ENCODE measurements at regions of chr19 and their contacts with region 1.

Region 1: GRCh38 chr19:4524808-4525562 is 6.7 kb upstream of the PLIN4 start:
- DNase-seq: peak in 1 of 2 donors; percentile 22
- H3K4me3 ChIP-seq: no peak overlapping the region
- CTCF ChIP-seq: no peak
- POLR2A ChIP-seq: no peak

Region 2: GRCh38 chr19:4108767-4109625 is 416.0 kb before region 1 on chr19:
- intact Hi-C with region 1: no loop called
- DNase-seq: no peak
- H3K4me3 ChIP-seq: no peak overlapping the region
- CTCF ChIP-seq: no peak
- POLR2A ChIP-seq: no peak

Region 3: GRCh38 chr19:4278419-4279266 is 246.3 kb before region 1 on chr19 and contains the start of gene SHD:
- intact Hi-C with region 1: loop called (anchors 10 kb)
- DNase-seq: no peak
- H3K4me3 ChIP-seq: no peak within 1 kb of the TSS
- CTCF ChIP-seq: no peak
- POLR2A ChIP-seq: no peak
- total RNA-seq, gene SHD: not detected

Region 4: DNA sequence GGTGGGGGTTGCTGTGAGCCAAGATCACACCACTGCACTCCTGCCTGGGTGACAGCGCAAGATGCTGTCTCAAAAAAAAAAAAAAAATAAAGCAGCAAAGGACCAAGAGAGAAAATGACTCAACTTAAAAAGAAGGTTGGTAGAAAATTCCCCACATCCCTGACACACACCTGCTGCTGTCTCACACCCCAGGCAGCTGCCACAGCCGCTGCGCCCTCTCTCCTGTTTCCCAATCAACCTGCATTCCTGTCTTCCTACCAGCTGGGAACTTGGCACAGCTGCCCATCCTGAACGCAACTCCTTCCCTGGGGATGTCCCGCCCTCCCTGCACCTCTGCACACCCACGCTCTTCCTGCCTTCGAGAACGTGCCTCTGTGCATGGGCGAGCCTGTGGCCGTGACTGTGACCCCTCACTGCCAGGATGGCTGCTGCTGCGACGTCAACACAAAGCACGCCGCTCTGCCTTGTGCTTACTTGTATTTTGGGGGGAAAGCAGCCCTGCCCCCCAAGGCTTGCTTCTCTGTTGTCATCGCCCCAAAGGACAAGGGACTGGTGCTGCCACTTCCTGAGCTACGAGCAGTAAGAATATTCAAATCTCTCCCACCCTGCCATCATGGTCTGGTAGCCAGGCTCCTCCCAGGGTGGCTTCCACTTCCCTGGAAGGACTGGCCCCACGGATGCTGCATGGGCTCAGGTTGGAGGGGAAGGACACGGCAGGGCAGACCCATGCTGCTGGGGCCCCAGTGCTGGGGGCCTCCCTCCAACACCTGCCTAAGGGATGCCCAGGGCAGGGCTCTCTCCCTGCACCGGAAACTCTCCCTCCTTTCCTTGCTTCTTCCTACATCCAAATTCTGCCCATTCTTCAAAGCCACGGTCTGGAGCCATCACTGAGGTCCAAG is 145.4 kb before region 1 on chr19:
- intact Hi-C with region 1: no loop called
- DNase-seq: peak; percentile 68 to 89
- H3K4me3 ChIP-seq: no peak overlapping the region
- CTCF ChIP-seq: no peak
- POLR2A ChIP-seq: no peak

Region 5: DNA sequence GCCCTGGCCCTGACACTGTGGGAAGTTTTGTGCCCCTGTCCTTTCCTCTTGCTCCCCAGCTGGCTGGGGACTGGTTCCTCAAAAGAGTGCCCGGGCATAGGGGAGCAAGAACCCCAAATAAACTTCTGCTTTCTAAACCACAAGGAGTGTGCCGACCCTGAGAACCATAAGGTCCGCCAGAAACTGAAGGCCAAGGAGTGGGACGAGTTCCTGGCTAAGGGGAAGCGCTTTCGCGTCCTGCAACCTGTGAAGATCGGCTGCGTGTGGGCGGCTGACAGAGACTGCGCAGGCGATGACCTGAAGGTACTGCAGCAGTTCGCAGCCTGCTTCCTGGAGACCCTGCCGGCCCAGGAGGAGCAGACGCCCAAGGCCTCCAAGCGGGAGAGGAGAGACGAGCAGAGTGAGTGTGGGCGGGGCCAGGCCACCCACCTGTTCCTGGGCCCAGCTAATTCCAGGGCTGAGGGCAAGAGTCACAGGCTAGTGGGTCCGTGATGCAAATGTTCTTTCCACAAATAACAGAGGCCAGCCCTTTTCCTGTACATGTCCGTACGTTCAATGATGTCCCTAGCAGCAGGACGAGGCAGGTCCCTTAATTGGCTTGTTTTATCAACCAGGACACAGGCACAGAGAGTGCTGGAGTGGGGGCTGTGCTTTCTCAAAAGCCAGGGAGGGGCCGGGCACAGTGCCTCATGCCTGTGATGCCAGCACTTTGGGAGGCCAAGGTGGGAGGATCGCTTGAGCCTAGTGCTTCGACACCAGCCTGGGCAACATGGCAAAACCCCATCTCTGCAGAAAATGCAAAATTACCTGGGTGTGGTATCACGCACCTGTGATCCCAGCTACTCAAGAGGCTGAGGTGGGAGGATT is 92.9 kb before region 1 on chr19:
- intact Hi-C with region 1: no loop called
- DNase-seq: no peak
- H3K4me3 ChIP-seq: no peak overlapping the region
- CTCF ChIP-seq: no peak
- POLR2A ChIP-seq: no peak

Region 6: GRCh38 chr19:4639531-4640246 is 114.7 kb after region 1 on chr19:
- intact Hi-C with region 1: no loop called
- DNase-seq: peak in 1 of 2 donors; percentile 91
- H3K4me3 ChIP-seq: peak overlapping the region; percentile 47
- CTCF ChIP-seq: no peak
- POLR2A ChIP-seq: no peak